ENCODE measurements at regions of chr1 and their contacts with region 1.

Region 1: GRCh38 chr1:46718727-46719622 is at the start of gene EFCAB14:
- DNase-seq: peak; percentile 85
- ATAC-seq: peak; percentile 97
- H3K4me3 ChIP-seq: peak within 1 kb of the TSS; percentile 69
- H3K27ac ChIP-seq: peak within 1 kb of the TSS; percentile 64
- H3K4me1 ChIP-seq: peaks cover 10% of the 10 kb centered on the region
- H3K27me3 ChIP-seq: peaks cover 17% of the 10 kb centered on the region
- CTCF ChIP-seq: no peak
- POLR2A ChIP-seq: peak; percentile 74
- RAD21 ChIP-seq: no peak
- total RNA-seq, gene EFCAB14: 39.2 and 43.0 TPM in 2 replicates

Region 2: DNA sequence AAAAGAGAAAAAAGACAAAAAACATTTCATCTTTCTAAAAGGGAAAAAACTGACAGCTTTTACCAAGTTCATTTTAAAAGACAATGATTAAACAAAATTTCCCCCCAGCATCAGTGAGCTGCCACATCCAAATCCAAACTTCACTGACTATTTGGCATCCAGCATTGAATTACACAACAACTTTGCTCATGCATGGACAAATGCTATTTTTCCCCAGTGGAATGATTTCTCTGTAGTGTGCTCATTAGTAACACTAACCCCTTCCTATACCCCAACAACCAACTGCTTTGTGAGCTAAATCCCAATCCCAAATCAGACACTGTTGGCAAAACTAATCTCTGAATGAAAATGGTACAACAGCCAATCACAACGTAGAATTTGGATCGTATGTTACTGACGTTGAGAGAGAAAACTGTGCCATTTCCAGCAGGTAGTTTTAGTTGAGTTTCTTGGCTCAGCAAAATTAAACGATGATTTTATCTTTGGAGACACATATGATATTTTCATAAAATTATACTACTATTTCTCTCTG is 624.4 kb before region 1 on chr1:
- CTCF ChIA-PET with region 1: no interaction called
- POLR2A ChIA-PET with region 1: no interaction called
- dilution Hi-C with region 1: no loop called
- in situ Hi-C with region 1: no loop called
- intact Hi-C with region 1: no loop called
- DNase-seq: peak; percentile 20
- ATAC-seq: no peak
- H3K4me3 ChIP-seq: no peak overlapping the region
- H3K27ac ChIP-seq: no peak overlapping the region
- H3K4me1 ChIP-seq: no peaks in the 10 kb centered on the region
- H3K27me3 ChIP-seq: no peaks in the 10 kb centered on the region
- CTCF ChIP-seq: no peak
- POLR2A ChIP-seq: no peak
- RAD21 ChIP-seq: no peak

Region 3: GRCh38 chr1:46401964-46402626 is 316.9 kb before region 1 on chr1:
- CTCF ChIA-PET with region 1: no interaction called
- POLR2A ChIA-PET with region 1: no interaction called
- dilution Hi-C with region 1: no loop called
- in situ Hi-C with region 1: loop called (anchors 25 kb)
- intact Hi-C with region 1: no loop called
- DNase-seq: peak; percentile 95
- ATAC-seq: peak; percentile 86
- H3K4me3 ChIP-seq: no peak overlapping the region
- H3K27ac ChIP-seq: no peak overlapping the region
- H3K4me1 ChIP-seq: no peaks in the 10 kb centered on the region; the same call in 1 of the 2 replicates
- H3K27me3 ChIP-seq: peaks cover 26% of the 10 kb centered on the region
- CTCF ChIP-seq: no peak
- POLR2A ChIP-seq: no peak
- RAD21 ChIP-seq: no peak

Region 4: GRCh38 chr1:46603858-46604549 is 115.0 kb before region 1 on chr1 and contains the start of gene MKNK1:
- CTCF ChIA-PET with region 1: interaction called, 3 read pairs
- POLR2A ChIA-PET with region 1: no interaction called
- dilution Hi-C with region 1: no loop called
- in situ Hi-C with region 1: no loop called
- intact Hi-C with region 1: loop called (anchors 5 kb)
- DNase-seq: peak; percentile 90
- ATAC-seq: peak; percentile 96
- H3K4me3 ChIP-seq: peak within 1 kb of the TSS; percentile 92
- H3K27ac ChIP-seq: peak within 1 kb of the TSS; percentile 62
- H3K4me1 ChIP-seq: peaks cover 12% of the 10 kb centered on the region
- H3K27me3 ChIP-seq: no peaks in the 10 kb centered on the region
- CTCF ChIP-seq: 0 out of 2 replicates have a peak, but pooled peaks have one; percentile 16
- POLR2A ChIP-seq: no peak
- RAD21 ChIP-seq: no peak
- total RNA-seq, gene MKNK1: 14.3 and 16.4 TPM in 2 replicates

Region 5: GRCh38 chr1:46616277-46617107 is 102.5 kb before region 1 on chr1 and contains the start of gene MOB3C:
- CTCF ChIA-PET with region 1: no interaction called
- POLR2A ChIA-PET with region 1: no interaction called
- dilution Hi-C with region 1: no loop called
- in situ Hi-C with region 1: no loop called
- intact Hi-C with region 1: loop called (anchors 5 kb)
- DNase-seq: peak; percentile 77
- ATAC-seq: peak; percentile 90
- H3K4me3 ChIP-seq: peak within 1 kb of the TSS; percentile 89
- H3K27ac ChIP-seq: peak within 1 kb of the TSS; percentile 87
- H3K4me1 ChIP-seq: peaks cover 20% of the 10 kb centered on the region
- H3K27me3 ChIP-seq: no peaks in the 10 kb centered on the region
- CTCF ChIP-seq: no peak
- POLR2A ChIP-seq: peak; percentile 77
- RAD21 ChIP-seq: no peak
- total RNA-seq, gene MOB3C: 6.4 and 7.3 TPM in 2 replicates

Region 6: GRCh38 chr1:46798810-46799209 is 79.8 kb after region 1 on chr1 and contains the start of gene CYP4B1:
- CTCF ChIA-PET with region 1: no interaction called
- POLR2A ChIA-PET with region 1: no interaction called
- dilution Hi-C with region 1: no loop called
- in situ Hi-C with region 1: no loop called
- intact Hi-C with region 1: no loop called
- DNase-seq: no peak
- ATAC-seq: no peak
- H3K4me3 ChIP-seq: no peak within 1 kb of the TSS
- H3K27ac ChIP-seq: no peak within 1 kb of the TSS
- H3K4me1 ChIP-seq: no peaks in the 10 kb centered on the region
- H3K27me3 ChIP-seq: no peaks in the 10 kb centered on the region
- CTCF ChIP-seq: no peak
- POLR2A ChIP-seq: no peak
- RAD21 ChIP-seq: no peak
- total RNA-seq, gene CYP4B1: not detected in 2 replicates